MCF 10A (cell line): ENCODE measurements at regions of chr7 and their contacts with region 1.

Region 1: GRCh38 chr7:129644634-129645230 is 33.2 kb downstream of the NRF1 start:
- DNase-seq: peak; percentile 62
- H3K4me3 Mint-ChIP-seq: no peak overlapping the region
- H3K27ac Mint-ChIP-seq: no peak overlapping the region
- H3K4me1 Mint-ChIP-seq: peaks cover 15% of the 10 kb centered on the region
- H3K27me3 Mint-ChIP-seq: no peaks in the 10 kb centered on the region
- CTCF ChIP-seq: peak; percentile 41

Region 2: DNA sequence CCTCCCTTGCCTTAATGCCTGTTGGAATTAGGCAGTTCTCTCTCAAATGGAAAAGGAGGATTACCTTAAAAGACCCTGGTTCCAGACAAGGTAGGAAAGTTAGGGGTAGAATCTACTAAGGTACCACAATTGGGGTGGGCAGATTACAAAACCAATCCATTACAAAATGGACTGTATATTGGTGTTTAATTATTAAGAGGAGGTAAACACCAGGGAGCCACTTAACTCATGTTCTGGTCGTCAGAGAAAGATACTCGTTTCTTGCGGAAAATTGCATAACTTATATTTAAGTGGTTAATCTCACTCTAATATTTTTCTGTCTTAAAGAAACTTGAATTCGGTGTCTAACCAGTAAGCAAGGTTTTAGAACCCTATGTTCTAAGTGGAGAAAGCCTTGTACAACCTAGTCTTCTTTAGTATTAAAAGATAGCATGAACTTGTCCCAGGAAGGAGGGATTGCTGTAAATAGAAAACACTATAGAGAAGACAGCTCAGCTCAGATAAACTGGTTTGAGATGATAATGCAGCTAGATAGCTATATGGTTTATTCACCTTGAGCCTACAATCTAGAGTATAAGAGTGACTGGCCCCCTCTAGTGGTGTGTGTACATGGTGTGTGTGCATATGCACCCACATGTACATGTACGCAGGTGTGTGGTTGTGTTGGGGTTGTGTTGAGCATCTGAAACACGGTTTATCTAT is 268.5 kb before region 1 on chr7:
- CTCF ChIA-PET with region 1: interaction called, 15 read pairs
- POLR2A ChIA-PET with region 1: no interaction called
- intact Hi-C with region 1: no loop called
- DNase-seq: peak; percentile 64
- H3K4me3 Mint-ChIP-seq: no peak overlapping the region
- H3K27ac Mint-ChIP-seq: no peak overlapping the region
- H3K4me1 Mint-ChIP-seq: no peaks in the 10 kb centered on the region
- H3K27me3 Mint-ChIP-seq: no peaks in the 10 kb centered on the region
- CTCF ChIP-seq: peak; percentile 49

Region 3: DNA sequence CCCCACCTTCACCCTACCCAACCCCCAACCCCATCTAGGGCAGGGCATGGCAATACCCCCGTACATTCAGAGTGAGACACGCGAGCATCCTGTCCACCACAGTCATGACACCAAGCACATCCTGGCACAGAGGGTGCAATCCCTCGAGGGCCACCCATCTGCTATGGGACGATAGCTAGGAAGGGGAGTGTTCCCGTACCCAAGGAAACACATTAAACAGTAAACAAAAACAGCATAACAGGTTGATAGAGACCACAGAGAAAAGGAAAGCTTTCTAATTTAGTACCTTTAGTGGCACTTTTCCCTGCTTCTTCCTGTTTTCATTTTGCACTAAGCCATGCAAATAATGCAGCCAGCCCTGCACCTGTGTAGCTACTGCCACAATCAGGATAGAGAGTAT is 144.7 kb before region 1 on chr7:
- CTCF ChIA-PET with region 1: interaction called, 16 read pairs
- POLR2A ChIA-PET with region 1: no interaction called
- intact Hi-C with region 1: no loop called
- DNase-seq: no peak
- H3K4me3 Mint-ChIP-seq: no peak overlapping the region
- H3K27ac Mint-ChIP-seq: no peak overlapping the region
- H3K4me1 Mint-ChIP-seq: peaks cover 6% of the 10 kb centered on the region
- H3K27me3 Mint-ChIP-seq: no peaks in the 10 kb centered on the region
- CTCF ChIP-seq: no peak

Region 4: GRCh38 chr7:129611246-129612111 is 33.3 kb before region 1 on chr7 and contains the start of gene NRF1:
- CTCF ChIA-PET with region 1: interaction called, 34 read pairs
- POLR2A ChIA-PET with region 1: interaction called, 16 read pairs
- intact Hi-C with region 1: no loop called
- DNase-seq: peak; percentile 86
- H3K4me3 Mint-ChIP-seq: peak within 1 kb of the TSS; percentile 91
- H3K27ac Mint-ChIP-seq: peak within 1 kb of the TSS; percentile 94
- H3K4me1 Mint-ChIP-seq: peaks cover 5% of the 10 kb centered on the region
- H3K27me3 Mint-ChIP-seq: no peaks in the 10 kb centered on the region
- CTCF ChIP-seq: no peak
- total RNA-seq, gene NRF1: 18.4 and 21.4 TPM in 2 replicates

Region 5: GRCh38 chr7:129657363-129657762 is 12.6 kb after region 1 on chr7:
- CTCF ChIA-PET with region 1: interaction called, 15 read pairs
- POLR2A ChIA-PET with region 1: interaction called, 5 read pairs
- intact Hi-C with region 1: no loop called
- DNase-seq: peak; percentile 83
- H3K4me3 Mint-ChIP-seq: no peak overlapping the region
- H3K27ac Mint-ChIP-seq: peak overlapping the region; percentile 53
- H3K4me1 Mint-ChIP-seq: peaks cover 9% of the 10 kb centered on the region
- H3K27me3 Mint-ChIP-seq: no peaks in the 10 kb centered on the region
- CTCF ChIP-seq: no peak